ENCODE measurements at regions of chr15 and their contacts with region 1.

Region 1: GRCh38 chr15:93866476-93866875 is 364.9 kb upstream of the MCTP2 start:
- DNase-seq: no peak
- H3K4me3 ChIP-seq: no peak overlapping the region
- H3K27ac ChIP-seq: no peak overlapping the region
- H3K4me1 ChIP-seq: no peaks in the 10 kb centered on the region
- CTCF ChIP-seq: no peak

Region 2: GRCh38 chr15:92306663-92307062 is 1559.8 kb before region 1 on chr15:
- CTCF ChIA-PET with region 1: no interaction called
- POLR2A ChIA-PET with region 1: interaction called, 10 read pairs
- intact Hi-C with region 1: no loop called
- DNase-seq: no peak
- H3K4me3 ChIP-seq: no peak overlapping the region
- H3K27ac ChIP-seq: no peak overlapping the region
- H3K4me1 ChIP-seq: no peaks in the 10 kb centered on the region
- CTCF ChIP-seq: 0 out of 2 replicates have a peak, but pooled peaks have one; percentile 25

Region 3: GRCh38 chr15:93497291-93497690 is 369.2 kb before region 1 on chr15:
- CTCF ChIA-PET with region 1: no interaction called
- POLR2A ChIA-PET with region 1: no interaction called
- intact Hi-C with region 1: no loop called
- DNase-seq: no peak
- H3K4me3 ChIP-seq: no peak overlapping the region
- H3K27ac ChIP-seq: no peak overlapping the region
- H3K4me1 ChIP-seq: no peaks in the 10 kb centered on the region
- CTCF ChIP-seq: no peak

Region 4: DNA sequence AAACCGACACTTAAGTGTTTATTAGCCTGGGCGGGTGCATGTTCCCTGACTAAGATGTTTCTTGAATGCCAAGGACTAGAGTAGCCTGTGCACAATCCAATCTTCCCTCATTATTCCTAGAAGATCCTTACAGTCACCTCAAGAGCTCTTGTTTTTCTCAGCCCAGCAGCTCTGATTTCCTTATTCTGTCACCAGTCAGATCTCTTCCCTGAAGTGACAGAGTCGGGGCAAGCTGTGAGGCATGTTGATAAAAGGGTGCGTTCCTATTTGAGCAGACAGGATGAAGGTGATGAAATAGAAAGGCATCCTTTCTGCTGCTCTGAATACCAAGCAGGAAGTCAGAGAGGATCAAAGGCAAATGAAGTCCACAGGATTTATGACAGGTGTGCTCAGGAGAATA is 239.3 kb after region 1 on chr15:
- CTCF ChIA-PET with region 1: no interaction called
- POLR2A ChIA-PET with region 1: no interaction called
- intact Hi-C with region 1: no loop called
- DNase-seq: no peak
- H3K4me3 ChIP-seq: no peak overlapping the region
- H3K27ac ChIP-seq: no peak overlapping the region
- H3K4me1 ChIP-seq: no peaks in the 10 kb centered on the region
- CTCF ChIP-seq: no peak

Measured in OCI-LY7 (cell line).